GM13976 (cell line): ENCODE measurements at regions of chr19 and their contacts with region 1.

Region 1: GRCh38 chr19:56066152-56067023 is 54.7 kb downstream of the ZNF787 start:
- DNase-seq: peak; percentile 87
- CTCF ChIP-seq: peak; percentile 91

Region 2: DNA sequence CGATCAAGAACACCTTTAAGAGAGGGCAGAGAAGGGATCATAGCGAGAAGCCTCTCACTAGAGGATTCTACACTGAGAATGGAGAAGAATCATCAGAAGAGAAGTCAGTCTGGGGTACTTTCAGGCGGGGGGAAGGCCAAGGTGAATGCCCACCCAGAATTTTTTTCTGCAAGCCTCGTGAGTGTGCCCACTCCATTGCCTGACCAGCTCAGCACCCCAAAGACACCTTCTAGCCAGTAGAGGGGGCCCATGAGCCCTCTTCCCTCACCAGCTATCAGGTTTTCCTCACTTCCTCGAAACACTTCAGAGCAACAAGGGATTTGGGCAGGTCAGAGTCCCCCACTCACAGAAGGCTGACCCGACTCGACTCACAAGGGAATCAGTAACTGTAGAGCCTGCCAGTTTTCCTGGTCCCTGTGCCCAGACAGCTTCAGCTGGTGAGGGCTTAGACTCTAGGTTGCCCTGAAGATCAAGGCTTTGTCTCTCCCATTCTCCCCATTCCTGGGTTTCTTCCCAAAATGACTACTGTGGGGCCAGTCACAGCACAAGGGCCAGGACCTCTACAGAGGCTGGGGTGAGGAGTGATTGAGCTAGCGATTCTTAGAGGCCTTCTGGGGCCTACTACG is 152.6 kb before region 1 on chr19:
- in situ Hi-C with region 1: no loop called
- DNase-seq: no peak
- CTCF ChIP-seq: no peak

Region 3: DNA sequence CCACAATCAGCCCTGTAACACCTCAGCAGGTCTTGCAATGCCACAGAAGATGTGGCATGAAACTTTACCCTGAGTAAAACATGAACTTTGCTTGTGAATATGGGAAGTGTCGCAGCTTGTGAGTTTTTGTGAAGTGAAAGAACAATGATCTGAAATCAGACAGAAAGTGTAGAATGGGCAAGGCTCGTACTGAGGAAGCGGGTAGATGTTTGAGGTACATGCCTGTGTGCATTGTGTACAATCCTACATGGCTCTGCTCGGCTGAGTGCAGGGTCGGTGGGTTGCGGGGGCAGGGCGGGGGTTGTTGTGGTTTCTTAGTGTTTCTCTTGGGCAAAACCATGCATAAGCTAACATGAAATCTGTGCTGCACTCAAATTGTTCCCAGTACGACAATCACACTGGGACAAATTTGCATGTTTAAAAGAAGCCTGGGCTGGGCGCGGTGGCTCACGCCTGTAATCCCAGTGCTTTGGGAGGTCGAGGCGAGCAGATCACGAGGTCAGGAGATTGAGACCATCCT is 135.3 kb before region 1 on chr19:
- in situ Hi-C with region 1: no loop called
- DNase-seq: no peak
- CTCF ChIP-seq: no peak

Region 4: DNA sequence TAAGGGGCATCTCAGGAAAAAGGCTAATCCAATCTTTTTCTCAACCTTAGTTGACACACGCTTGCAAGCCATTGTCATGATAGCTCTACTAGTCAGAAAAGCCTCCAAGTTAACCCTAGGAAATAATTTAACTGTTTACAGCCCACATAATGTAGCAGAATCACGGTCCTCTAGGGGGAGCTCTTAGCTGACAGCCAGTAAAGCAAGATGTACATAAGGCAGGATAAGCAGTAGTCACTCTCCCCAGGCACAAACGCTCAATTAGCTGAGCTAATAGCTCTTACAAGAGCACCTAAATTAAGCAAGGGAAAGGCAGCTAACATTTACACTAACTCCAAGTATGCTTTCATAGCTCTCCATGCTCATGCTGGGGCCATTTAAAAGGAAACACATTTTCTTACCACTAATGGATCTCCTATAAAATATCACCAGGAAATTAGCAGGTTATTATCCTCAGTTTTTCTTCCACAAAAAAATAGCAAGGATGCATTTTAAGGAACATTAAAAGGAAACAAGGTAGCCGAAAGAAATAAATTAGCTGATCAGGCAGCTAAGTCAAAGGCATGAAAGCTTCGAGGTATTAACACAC is 282.0 kb after region 1 on chr19:
- in situ Hi-C with region 1: loop called (anchors 10 kb)
- DNase-seq: no peak
- CTCF ChIP-seq: peak; percentile 13

Region 5: DNA sequence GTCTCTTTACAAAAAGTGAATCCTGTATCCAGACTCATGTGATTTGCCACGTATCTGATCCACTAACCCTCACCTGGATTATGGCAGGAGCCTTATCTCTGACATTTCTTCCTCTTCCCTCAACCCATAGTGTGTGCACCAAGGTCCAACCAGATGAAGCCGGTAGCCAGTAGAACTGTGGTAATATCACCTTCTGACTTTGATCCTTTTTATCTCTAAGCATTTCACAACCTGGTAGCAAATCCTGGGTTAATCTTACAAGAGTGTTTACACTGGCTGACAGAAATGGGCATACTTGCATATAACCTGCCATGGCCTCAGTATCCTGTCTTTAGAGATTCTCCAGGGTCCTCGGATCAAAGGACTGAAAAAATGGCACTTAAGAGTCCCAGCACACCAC is 1848.1 kb after region 1 on chr19:
- in situ Hi-C with region 1: no loop called
- DNase-seq: no peak
- CTCF ChIP-seq: no peak